Uterus (tissue), 4 donors: ENCODE measurements at regions of chr16 and their contacts with region 1.

Region 1: GRCh38 chr16:19783363-19784182 is 65.5 kb downstream of the IQCK start:
- DNase-seq: no peak
- H3K4me3 ChIP-seq: no peak overlapping the region
- H3K27ac ChIP-seq: peak overlapping the region in 1 of 2 donors; percentile 16
- H3K4me1 ChIP-seq: no peaks in the 10 kb centered on the region
- H3K27me3 ChIP-seq: no peaks in the 10 kb centered on the region
- CTCF ChIP-seq: no peak
- POLR2A ChIP-seq: no peak

Region 2: GRCh38 chr16:19844945-19845641 is 61.5 kb after region 1 on chr16:
- intact Hi-C with region 1: loop called (anchors 10 kb)
- DNase-seq: peak; percentile 23 to 43
- H3K4me3 ChIP-seq: no peak overlapping the region
- H3K27ac ChIP-seq: peak overlapping the region; percentile 44 to 82
- H3K4me1 ChIP-seq: no peaks in the 10 kb centered on the region
- H3K27me3 ChIP-seq: no peaks in the 10 kb centered on the region
- CTCF ChIP-seq: no peak
- POLR2A ChIP-seq: no peak